Esophagus muscularis mucosa (tissue), 4 donors: ENCODE measurements at regions of chr9 and their contacts with region 1.

Region 1: GRCh38 chr9:129145822-129146292 is 32.2 kb downstream of the IER5L start:
- DNase-seq: no peak
- H3K4me3 ChIP-seq: no peak overlapping the region
- H3K27ac ChIP-seq: peak overlapping the region; percentile 93 to 99 (median 98)
- H3K4me1 ChIP-seq: peaks cover 74 to 99% (median 82%) of the 10 kb centered on the region in 4 donors
- H3K27me3 ChIP-seq: no peaks in the 10 kb centered on the region
- CTCF ChIP-seq: no peak
- EP300 ChIP-seq: no peak
- POLR2A ChIP-seq: no peak

Region 2: DNA sequence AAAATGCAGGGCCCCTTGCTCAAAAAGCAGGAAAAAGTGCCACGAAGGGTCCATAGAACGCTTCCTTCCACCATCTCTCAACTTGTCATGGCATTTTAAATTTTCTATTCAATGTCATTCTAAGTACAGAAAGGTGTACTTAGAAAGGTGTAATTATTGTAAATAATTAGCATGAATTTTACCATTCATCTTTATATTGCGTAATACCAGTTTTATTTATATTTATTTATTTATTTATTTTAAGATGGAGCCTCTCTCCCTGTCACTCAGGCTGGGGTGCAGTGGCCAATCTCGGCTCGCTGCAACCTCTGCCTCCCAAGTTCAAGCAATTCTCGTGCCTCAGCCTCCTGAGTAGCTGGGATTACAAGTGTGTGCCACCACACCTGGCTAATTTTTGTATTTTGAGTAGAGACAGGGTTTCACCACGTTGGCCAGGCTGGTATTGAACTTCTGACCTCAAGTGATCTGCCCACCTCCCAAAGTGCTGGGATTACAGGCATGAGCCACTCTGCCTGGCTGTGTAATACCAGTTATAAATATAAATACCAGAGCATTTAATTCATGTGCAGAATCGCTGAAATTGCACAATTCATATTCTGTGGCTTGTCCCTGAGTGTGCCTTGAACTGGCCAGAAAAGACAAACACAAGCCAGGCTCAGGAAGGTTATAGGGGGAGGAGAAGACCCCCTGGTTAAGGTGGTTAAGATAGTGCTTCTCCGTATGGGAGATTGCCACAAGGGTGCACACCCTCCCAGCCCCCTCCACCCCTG is 17.2 kb after region 1 on chr9:
- intact Hi-C with region 1: loop called (anchors 2 kb)
- DNase-seq: no peak
- H3K4me3 ChIP-seq: no peak overlapping the region
- H3K27ac ChIP-seq: peak overlapping the region; percentile 69 to 73 (median 71)
- H3K4me1 ChIP-seq: peaks cover 21 to 40% (median 39%) of the 10 kb centered on the region in 4 donors
- H3K27me3 ChIP-seq: no peaks in the 10 kb centered on the region
- CTCF ChIP-seq: no peak
- EP300 ChIP-seq: no peak
- POLR2A ChIP-seq: no peak

Region 3: GRCh38 chr9:129202613-129203555 is 57.0 kb after region 1 on chr9:
- intact Hi-C with region 1: no loop called
- DNase-seq: peak; percentile 96
- H3K4me3 ChIP-seq: peak overlapping the region; percentile 73 to 85 (median 74)
- H3K27ac ChIP-seq: peak overlapping the region; percentile 90 to 92 (median 92)
- H3K4me1 ChIP-seq: peaks cover 0 to 25% (median 21%) of the 10 kb centered on the region in 4 donors
- H3K27me3 ChIP-seq: no peaks in the 10 kb centered on the region
- CTCF ChIP-seq: peak in 1 of 3 experiments; percentile 9
- EP300 ChIP-seq: no peak
- POLR2A ChIP-seq: peak; percentile 56

Region 4: DNA sequence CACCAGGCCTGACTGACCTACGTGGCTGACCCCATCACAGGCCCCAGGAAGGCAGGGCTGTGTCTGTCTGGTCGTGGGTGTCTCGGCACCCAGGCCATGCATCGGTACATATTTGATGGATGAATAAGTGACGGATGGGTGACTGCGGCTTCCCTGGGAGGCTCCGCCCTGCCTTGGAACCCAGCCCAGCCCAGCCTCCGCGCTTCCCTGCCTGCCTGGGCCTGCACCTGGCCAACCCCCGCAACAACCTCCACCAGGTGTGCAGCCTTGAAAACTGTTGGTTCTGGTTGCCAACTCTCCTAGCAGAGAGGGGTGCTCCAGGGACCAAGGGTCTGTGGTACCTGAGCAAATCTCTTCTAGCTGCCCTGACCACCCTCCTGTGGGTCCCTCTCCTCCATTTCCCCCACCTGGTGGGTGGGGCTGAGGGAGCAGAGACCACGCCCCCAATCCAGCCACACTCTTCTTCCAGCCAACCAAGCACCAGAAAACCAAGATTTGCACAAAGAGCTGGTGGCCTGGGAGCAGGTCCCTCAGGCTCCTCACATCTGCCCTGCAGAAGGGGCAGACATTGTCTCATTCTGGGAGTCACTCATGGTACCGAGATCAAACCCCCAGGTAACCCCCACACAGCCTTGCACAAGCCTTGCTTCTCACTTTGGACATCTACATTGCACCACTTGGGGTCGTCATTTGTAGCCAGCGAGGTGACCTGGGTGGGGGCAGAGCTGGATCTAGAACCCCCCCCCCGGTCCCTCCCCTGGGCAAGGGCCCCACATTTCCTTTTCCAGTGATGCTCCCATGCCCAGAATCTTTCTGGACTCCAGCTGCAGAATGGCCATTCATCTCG is 132.8 kb after region 1 on chr9:
- intact Hi-C with region 1: no loop called
- DNase-seq: peak; percentile 68
- H3K4me3 ChIP-seq: no peak overlapping the region
- H3K27ac ChIP-seq: no peak overlapping the region
- H3K4me1 ChIP-seq: peaks cover 0 to 5% (median 4%) of the 10 kb centered on the region in 4 donors
- H3K27me3 ChIP-seq: peaks cover 0 to 10% (median 0%) of the 10 kb centered on the region in 4 donors
- CTCF ChIP-seq: no peak
- EP300 ChIP-seq: no peak
- POLR2A ChIP-seq: no peak